Heart left ventricle (tissue), 16 donors: ENCODE measurements at regions of chr10 and their contacts with region 1.

Region 1: DNA sequence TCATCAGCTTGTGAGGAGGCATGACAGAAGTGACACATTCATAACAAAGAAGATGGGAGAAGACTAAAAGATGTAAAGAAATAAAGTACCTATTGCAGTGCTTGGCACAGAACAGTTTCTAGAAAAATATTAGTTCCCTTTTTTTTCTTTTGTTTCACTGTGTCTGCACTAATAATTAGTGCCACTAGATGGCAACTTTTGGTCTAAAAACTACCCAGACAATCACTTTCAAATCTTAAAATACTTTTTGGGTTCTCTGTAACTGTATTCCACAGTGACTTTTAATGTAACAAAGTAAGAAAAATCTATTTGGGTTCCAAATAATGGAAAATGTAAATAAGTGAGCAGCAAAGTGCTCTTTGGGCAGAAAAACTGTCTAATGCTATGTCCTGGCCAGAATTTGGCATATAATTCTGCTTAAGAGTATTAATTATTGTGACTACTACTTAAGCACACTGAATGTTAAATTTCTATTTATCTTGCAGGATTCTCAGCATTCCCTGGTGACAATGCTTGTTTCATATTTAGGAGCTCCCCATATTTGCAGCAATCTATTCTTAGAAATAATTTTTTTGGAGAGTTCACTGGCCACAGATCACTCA is 134.8 kb upstream of the KIF5B start:
- DNase-seq: no peak
- ATAC-seq: no peak
- H3K4me3 ChIP-seq: no peak overlapping the region
- H3K27ac ChIP-seq: no peak overlapping the region
- H3K4me1 ChIP-seq: peaks cover 0 to 7% (median 0%) of the 10 kb centered on the region in 12 donors
- H3K27me3 ChIP-seq: no peaks in the 10 kb centered on the region
- CTCF ChIP-seq: peak; percentile 58 to 82 (median 71)
- POLR2A ChIP-seq: no peak

Region 2: DNA sequence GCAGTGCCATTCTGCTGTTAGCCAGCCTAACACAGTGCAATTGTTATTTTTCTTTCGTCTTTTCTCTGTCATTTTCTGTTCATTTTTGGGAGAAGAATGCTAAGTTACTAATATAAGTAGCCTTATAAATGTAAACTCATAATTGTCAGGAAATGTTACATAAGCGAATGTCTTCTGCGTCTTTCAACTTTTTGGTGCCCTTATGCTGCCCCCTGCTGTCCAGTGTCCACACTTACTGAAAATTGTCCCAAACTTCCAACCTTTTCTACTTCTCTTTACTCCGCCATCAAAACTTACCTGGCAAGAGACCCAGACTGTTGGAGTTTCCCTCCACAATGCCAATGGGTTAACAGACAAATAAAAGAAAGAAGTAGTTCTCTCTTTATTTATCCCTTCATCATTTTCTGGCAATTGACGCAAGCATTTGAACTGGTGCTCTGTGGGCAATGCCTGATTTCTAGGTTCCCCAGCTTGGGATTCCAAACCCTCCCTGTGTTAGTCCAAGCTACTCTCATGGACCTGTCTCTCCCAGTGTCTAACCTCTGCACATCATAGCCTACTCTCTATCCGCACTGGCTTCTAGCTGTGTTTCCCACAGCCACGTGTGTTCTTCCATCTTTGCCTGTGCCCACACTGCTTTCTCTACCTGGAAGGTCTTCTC is 176.9 kb after region 1 on chr10:
- intact Hi-C with region 1: loop called in 7 of 10 experiments (anchors 2 to 5 kb)
- DNase-seq: peak; percentile 62 to 80 (median 69)
- ATAC-seq: peak in 3 of 4 donors; percentile 38 to 53 (median 40)
- H3K4me3 ChIP-seq: peak overlapping the region in 7 of 12 donors; percentile 3 to 43 (median 26)
- H3K27ac ChIP-seq: peak overlapping the region in 7 of 12 donors; percentile 13 to 73 (median 28)
- H3K4me1 ChIP-seq: peaks cover 0 to 64% (median 33%) of the 10 kb centered on the region in 12 donors
- H3K27me3 ChIP-seq: no peaks in the 10 kb centered on the region
- CTCF ChIP-seq: peak; percentile 66 to 88 (median 80)
- POLR2A ChIP-seq: no peak

Region 3: DNA sequence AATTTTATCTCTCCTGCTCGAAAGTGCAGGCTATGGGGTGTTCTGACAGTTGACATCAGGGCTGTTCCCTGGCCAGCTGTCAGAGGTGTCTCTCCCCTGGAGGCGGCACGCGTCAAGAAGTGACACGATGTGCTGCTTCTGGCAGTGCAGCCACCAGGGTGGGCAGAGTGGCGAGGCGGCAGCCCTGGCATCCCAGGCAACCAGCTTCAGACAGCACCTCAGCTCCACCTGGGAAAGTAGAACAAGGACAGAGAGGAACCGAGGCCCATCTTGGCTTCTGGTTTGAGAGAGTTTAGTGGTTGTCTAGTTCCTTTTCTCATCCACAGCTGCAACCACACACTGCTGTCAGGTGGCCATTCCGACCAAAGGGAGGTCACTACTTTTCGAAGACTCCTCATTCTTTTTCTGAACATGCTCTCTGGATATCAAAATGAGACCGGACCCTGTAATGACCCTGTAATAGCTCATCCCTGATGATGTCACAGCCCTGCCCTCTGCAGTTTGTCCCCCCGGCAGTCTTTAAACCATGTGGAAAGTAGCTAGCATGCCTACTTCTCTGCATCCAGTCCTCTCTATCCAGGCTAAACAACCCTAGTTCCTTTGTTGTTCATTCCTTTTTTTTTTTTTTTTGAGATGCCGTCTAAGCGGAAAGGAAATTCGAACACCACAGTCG is 1524.4 kb after region 1 on chr10:
- intact Hi-C with region 1: no loop called
- DNase-seq: peak; percentile 16 to 82 (median 60)
- ATAC-seq: peak; percentile 55 to 94 (median 75)
- H3K4me3 ChIP-seq: no peak overlapping the region
- H3K27ac ChIP-seq: no peak overlapping the region
- H3K4me1 ChIP-seq: peaks cover 7 to 38% (median 23%) of the 10 kb centered on the region in 12 donors
- H3K27me3 ChIP-seq: no peaks in the 10 kb centered on the region
- CTCF ChIP-seq: peak in 1 of 12 donors; percentile 14
- POLR2A ChIP-seq: no peak